Aorta (tissue), 5 donors: ENCODE measurements at regions of chr2 and their contacts with region 1.

Region 1: GRCh38 chr2:97806738-97807618 is 93.6 kb downstream of the ZAP70 start:
- DNase-seq: peak; percentile 89 to 93
- ATAC-seq: peak; percentile 91
- H3K4me3 ChIP-seq: no peak overlapping the region
- H3K27ac ChIP-seq: no peak overlapping the region
- H3K4me1 ChIP-seq: no peaks in the 10 kb centered on the region
- H3K27me3 ChIP-seq: no peaks in the 10 kb centered on the region

Region 2: GRCh38 chr2:98269274-98269673 is 462.3 kb after region 1 on chr2:
- intact Hi-C with region 1: loop called (anchors 5 to 10 kb)
- DNase-seq: no peak
- ATAC-seq: no peak
- H3K4me3 ChIP-seq: no peak overlapping the region
- H3K27ac ChIP-seq: peak overlapping the region; percentile 43 to 84
- H3K4me1 ChIP-seq: peaks cover 0 to 2% of the 10 kb centered on the region in 2 donors
- H3K27me3 ChIP-seq: no peaks in the 10 kb centered on the region

Region 3: GRCh38 chr2:98385050-98385699 is 578.2 kb after region 1 on chr2:
- intact Hi-C with region 1: loop called (anchors 2 kb)
- DNase-seq: peak; percentile 84 to 92
- ATAC-seq: peak; percentile 79
- H3K4me3 ChIP-seq: no peak overlapping the region
- H3K27ac ChIP-seq: no peak overlapping the region
- H3K4me1 ChIP-seq: no peaks in the 10 kb centered on the region
- H3K27me3 ChIP-seq: no peaks in the 10 kb centered on the region